ENCODE measurements at regions of chr10 and their contacts with region 1.

Region 1: GRCh38 chr10:22316285-22317120 is at the start of gene COMMD3:
- DNase-seq: peak; percentile 87
- H3K4me3 Mint-ChIP-seq: peak within 1 kb of the TSS; percentile 92
- H3K27ac Mint-ChIP-seq: peak within 1 kb of the TSS; percentile 92
- H3K4me1 Mint-ChIP-seq: peaks cover 37% of the 10 kb centered on the region
- H3K27me3 Mint-ChIP-seq: peaks cover 4% of the 10 kb centered on the region
- total RNA-seq, gene COMMD3: 84.6 to 91.4 TPM

Region 2: DNA sequence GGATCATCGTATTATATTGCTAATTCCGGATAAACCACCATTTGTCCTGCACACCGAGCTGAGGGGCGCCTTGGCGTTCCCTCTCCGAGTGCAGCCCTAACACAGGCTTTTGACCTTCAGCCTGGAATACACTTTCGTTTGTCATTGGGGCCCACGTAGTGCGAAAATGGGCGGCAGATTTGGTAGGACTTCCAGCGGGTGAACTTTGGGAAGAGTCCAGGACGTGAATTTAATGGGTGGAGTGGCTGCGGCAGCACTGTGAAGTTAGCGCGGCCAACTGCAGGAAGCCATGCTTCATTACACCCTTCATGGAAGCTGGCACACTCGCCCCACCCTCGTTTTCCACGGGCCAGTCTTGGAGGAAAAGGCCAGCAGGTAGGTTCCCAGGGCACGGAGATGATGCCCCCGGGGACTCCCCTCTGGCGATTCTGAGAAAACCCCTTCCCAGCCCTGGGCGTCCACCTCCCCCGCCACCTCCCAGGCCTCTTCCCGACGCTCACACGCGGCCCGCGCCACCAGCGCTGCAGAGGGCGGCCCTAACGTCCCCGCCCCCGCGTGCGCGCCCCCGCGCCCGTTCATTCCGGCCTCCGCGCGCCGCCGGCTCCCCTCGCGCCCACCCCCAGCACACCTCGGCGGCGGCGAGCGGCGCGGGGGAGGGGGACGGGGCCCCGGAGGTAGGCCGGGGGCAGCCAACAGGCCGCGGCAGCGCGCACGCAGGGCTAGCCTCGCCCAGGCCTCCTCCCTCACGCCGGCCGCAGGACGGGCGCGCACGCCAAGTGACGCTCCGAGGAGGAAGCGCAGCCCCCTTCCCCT is 782.8 kb before region 1 on chr10 and contains the start of gene MLLT10:
- CTCF ChIA-PET with region 1: no interaction called
- POLR2A ChIA-PET with region 1: no interaction called
- intact Hi-C with region 1: loop called (anchors 2 kb)
- DNase-seq: peak; percentile 94
- H3K4me3 Mint-ChIP-seq: peak within 1 kb of the TSS; percentile 87
- H3K27ac Mint-ChIP-seq: peak within 1 kb of the TSS; percentile 96
- H3K4me1 Mint-ChIP-seq: peaks cover 27% of the 10 kb centered on the region
- H3K27me3 Mint-ChIP-seq: no peaks in the 10 kb centered on the region
- total RNA-seq, gene MLLT10: 32.8 to 35.4 TPM

Region 3: GRCh38 chr10:22103701-22104470 is 212.6 kb before region 1 on chr10:
- CTCF ChIA-PET with region 1: no interaction called
- POLR2A ChIA-PET with region 1: no interaction called
- intact Hi-C with region 1: loop called (anchors 5 kb)
- DNase-seq: no peak
- H3K4me3 Mint-ChIP-seq: no peak overlapping the region
- H3K27ac Mint-ChIP-seq: no peak overlapping the region
- H3K4me1 Mint-ChIP-seq: no peaks in the 10 kb centered on the region
- H3K27me3 Mint-ChIP-seq: no peaks in the 10 kb centered on the region

Region 4: GRCh38 chr10:22251751-22252223 is 64.7 kb before region 1 on chr10:
- CTCF ChIA-PET with region 1: interaction called, 4 read pairs
- POLR2A ChIA-PET with region 1: interaction called, 11 read pairs
- intact Hi-C with region 1: loop called (anchors 1 kb)
- DNase-seq: peak; percentile 83
- H3K4me3 Mint-ChIP-seq: peak overlapping the region; percentile 83
- H3K27ac Mint-ChIP-seq: peak overlapping the region; percentile 97
- H3K4me1 Mint-ChIP-seq: peaks cover 42% of the 10 kb centered on the region
- H3K27me3 Mint-ChIP-seq: peaks cover 3% of the 10 kb centered on the region

Region 5: DNA sequence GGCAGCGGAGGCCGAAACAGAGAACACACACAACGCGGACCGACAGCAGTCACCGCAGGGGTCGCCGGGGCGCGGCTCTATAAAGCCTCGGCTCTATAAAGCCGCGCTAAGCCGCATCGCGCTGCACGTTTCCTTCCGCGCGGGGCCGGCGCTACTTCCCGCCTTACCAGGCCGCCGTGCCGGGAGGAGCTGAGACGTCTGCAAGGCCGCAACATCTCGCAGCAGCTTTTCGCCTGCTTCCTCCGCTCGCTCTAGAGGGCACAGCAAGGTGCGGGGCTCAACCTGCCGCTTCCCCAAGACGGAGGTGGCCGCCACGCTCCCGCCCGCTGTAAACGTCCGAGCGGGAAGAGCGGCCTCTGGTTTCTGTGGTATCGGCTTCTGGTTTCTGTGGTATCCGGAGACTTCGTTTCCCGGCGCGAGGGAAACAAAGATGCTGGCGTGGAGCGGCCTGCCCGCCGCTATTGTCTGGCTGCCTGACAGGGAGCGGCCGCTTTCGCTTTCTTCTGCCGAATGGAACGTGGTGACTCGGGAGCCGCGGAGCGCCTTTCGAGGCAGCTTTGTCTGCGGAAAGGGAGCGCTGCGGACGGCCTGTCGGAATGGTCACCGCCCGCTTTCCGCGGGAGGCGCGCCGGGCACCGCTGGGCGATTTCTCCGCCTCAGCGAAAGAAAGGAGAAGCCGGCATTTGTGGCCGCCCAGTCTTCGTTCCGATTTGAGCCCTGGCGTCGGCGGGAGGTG is 120.5 kb after region 1 on chr10:
- CTCF ChIA-PET with region 1: no interaction called
- POLR2A ChIA-PET with region 1: interaction called, 8 read pairs
- intact Hi-C with region 1: loop called (anchors 2 kb)
- DNase-seq: peak; percentile 89
- H3K4me3 Mint-ChIP-seq: peak overlapping the region; percentile 88
- H3K27ac Mint-ChIP-seq: peak overlapping the region; percentile 91
- H3K4me1 Mint-ChIP-seq: peaks cover 50% of the 10 kb centered on the region
- H3K27me3 Mint-ChIP-seq: no peaks in the 10 kb centered on the region